ENCODE measurements at regions of chr2 and their contacts with region 1.

Region 1: DNA sequence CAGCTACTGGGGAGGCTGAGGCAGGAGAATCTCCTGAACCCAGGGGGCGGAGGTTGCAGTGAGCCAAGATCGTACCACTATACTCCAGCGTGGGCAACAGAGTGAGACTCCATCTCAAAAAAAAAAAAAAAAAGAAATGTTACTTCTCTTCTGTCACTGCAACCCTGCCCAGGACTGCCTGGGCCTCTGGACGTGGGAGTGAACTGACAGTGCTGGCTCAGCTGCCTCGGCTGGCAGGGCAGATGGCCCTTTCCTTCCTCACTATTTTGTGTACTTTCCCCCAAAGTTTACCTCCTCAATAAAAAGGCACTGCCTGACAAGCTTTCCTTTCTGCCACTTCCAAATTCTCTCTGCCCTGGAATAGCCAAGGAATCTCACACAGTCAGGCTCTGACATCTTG is 12.5 kb upstream of the GPR155 start:
- DNase-seq: no peak
- ATAC-seq: no peak
- H3K4me3 ChIP-seq: no peak overlapping the region
- H3K27ac ChIP-seq: no peak overlapping the region
- H3K4me1 ChIP-seq: no peaks in the 10 kb centered on the region
- H3K27me3 ChIP-seq: peaks cover 12% of the 10 kb centered on the region
- CTCF ChIP-seq: no peak
- POLR2A ChIP-seq: no peak
- RAD21 ChIP-seq: no peak

Region 2: GRCh38 chr2:174399171-174399570 is 100.2 kb before region 1 on chr2:
- CTCF ChIA-PET with region 1: no interaction called
- POLR2A ChIA-PET with region 1: no interaction called
- dilution Hi-C with region 1: no loop called
- in situ Hi-C with region 1: no loop called
- intact Hi-C with region 1: no loop called
- DNase-seq: peak; percentile 54
- ATAC-seq: no peak
- H3K4me3 ChIP-seq: no peak overlapping the region
- H3K27ac ChIP-seq: no peak overlapping the region
- H3K4me1 ChIP-seq: peaks cover 1% of the 10 kb centered on the region; the same call in 1 of the 2 replicates
- H3K27me3 ChIP-seq: no peaks in the 10 kb centered on the region
- CTCF ChIP-seq: no peak
- POLR2A ChIP-seq: no peak
- RAD21 ChIP-seq: no peak

Region 3: GRCh38 chr2:174511580-174512248 is 12.3 kb after region 1 on chr2:
- CTCF ChIA-PET with region 1: no interaction called
- POLR2A ChIA-PET with region 1: no interaction called
- dilution Hi-C with region 1: no loop called
- in situ Hi-C with region 1: no loop called
- intact Hi-C with region 1: loop called (anchors 1 kb)
- DNase-seq: no peak
- ATAC-seq: no peak
- H3K4me3 ChIP-seq: no peak overlapping the region
- H3K27ac ChIP-seq: no peak overlapping the region
- H3K4me1 ChIP-seq: no peaks in the 10 kb centered on the region
- H3K27me3 ChIP-seq: no peaks in the 10 kb centered on the region; the same call in 1 of the 2 replicates
- CTCF ChIP-seq: no peak
- POLR2A ChIP-seq: no peak
- RAD21 ChIP-seq: no peak